OCI-LY7 (cell line): ENCODE measurements at regions of chr17 and their contacts with region 1.

Region 1: DNA sequence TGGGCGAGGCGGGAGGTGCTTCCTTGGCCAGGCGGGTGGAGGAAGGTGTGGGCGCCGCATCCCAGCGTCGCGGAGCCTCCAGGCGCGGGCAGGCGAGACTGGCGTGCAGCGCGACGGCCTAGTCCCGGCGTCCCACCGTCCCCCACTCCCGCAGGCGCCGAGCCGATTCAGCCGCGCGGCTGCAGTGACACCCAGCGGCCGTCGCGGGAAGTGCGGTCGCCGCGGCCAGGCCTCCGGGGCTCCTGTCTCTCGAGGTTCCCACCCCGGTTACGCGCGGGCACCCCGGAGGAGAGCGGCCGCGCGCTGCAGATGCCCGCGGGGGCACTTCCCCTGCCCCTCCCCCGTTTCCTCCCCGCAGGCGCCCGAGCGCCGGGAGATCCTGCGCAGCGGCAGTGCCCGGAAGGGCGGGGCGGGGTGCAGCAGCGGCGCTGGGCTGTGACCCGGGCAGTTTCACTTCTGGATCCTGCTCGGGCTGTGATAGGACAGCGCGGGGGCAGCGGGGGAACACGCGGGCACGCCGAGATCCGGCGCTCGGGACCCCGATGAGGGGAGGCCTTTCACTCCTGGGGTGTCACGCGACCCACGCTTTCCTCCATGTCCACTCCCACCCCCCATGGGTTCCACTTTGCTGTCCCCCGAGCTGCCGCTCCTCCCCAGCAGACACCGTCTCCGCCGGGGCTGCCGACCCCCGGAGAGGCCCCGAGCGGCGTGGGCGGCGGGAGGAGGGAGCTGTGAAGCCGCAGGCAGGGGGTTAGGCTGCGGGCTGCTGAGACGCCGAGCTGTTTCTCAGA is 16.6 kb downstream of the GRB7 start:
- DNase-seq: peak; percentile 99
- H3K4me3 ChIP-seq: peak overlapping the region; percentile 67
- H3K27ac ChIP-seq: peak overlapping the region; percentile 99
- H3K4me1 ChIP-seq: peaks cover 73% of the 10 kb centered on the region
- CTCF ChIP-seq: peak; percentile 76

Region 2: DNA sequence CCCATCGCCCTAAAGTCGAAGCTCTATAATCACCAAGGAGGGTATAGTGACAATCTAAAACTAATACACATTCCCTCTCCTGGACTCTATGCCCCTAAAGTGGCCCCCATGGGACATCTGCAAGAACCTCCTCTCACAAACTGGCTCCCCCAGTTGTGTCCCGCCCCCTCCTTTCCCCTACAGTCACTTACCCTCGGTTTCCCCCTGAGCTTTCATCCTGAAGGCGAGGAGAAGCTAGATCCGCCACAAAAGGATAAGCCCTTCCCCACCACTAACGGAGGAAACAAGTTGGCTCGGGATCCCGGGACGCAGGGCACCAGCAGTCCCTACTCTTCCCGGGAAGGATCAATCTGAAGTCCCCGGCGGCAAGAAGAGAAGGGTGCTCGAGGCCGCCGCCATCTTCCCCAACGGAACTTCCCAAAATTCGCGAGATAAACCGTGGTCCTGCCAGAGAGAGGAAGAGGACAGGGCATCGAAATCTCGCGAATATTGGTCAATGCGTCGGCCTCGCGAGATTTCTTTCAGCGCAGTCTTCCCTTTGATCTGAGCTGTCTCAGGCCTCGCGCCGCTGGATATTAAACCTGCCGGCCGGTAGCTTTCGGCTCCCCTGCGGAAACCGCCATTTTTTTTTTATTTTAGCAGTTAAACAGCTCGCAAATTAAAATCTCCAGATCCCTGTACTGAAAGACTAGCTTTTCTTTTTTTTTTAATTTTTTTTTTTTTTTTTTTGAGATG is 303.3 kb before region 1 on chr17 and contains the start of gene MED1:
- CTCF ChIA-PET with region 1: no interaction called
- POLR2A ChIA-PET with region 1: no interaction called
- intact Hi-C with region 1: loop called (anchors 10 kb)
- DNase-seq: peak; percentile 100
- H3K4me3 ChIP-seq: peak within 1 kb of the TSS; percentile 95
- H3K27ac ChIP-seq: peak within 1 kb of the TSS; percentile 60
- H3K4me1 ChIP-seq: peaks cover 26% of the 10 kb centered on the region
- CTCF ChIP-seq: no peak
- total RNA-seq, gene MED1: 32.2 and 33.9 TPM in 2 replicates

Region 3: DNA sequence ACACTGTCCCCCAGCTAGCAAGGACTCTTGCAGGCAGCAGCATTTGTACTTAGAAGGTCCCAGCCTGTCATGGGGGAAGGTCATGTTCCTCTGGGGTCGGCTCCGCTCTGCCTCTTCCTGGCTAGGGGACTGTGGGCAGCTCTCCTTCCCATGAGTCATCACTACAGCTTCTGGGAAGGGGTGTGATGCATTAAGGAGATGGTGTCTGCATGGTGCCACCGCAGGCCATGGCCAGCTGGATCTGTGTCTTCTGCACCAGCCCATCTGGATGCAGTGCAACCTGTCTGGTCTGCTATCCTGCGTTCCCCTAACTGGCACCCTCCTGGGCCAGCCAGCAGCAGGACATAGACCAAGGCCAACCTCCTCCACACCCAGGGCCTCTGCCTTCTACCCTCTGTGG is 111.1 kb before region 1 on chr17:
- CTCF ChIA-PET with region 1: no interaction called
- POLR2A ChIA-PET with region 1: no interaction called
- intact Hi-C with region 1: no loop called
- DNase-seq: no peak
- H3K4me3 ChIP-seq: no peak overlapping the region
- H3K27ac ChIP-seq: no peak overlapping the region
- H3K4me1 ChIP-seq: peaks cover 10% of the 10 kb centered on the region
- CTCF ChIP-seq: no peak

Region 4: DNA sequence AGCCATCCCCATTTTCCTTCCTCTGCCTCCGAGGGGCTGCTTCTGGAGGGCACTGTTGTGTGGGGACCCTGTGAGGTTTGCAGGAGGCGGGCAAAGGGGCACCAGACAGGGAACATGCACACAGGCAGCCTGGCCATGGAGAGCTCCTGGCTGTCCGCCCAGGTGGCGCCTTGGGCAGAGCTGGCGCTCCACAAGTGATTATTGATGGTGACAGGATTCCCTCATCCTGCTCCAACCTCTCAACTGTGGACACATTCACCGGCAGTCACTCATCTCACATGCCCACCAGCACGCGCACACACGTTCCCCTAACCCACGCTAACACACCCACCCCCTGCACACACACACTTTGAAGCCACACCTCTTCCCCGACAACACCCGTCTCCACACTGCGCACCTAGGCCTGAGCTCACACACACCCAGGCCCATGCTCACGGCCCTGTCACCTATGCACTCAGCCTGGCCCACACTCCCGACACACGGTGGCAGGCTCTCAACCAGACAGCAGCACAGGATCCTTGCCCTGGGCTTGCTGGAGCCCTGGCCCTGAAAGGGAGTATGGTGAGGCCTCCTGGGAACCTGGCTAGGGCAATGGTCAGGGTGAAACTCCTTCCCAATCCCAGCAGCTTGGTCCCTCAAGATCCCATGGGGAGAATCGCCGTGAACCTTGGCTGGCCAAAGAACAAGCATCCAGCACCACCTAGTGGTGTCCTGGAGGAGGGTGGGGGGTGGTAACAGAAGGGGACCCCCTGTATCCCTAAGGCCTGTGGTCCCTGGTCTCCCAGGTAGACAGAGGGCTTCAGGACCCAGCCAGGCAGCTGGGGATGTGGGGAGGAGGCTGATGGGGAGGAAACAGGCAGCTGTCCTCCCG is 82.5 kb before region 1 on chr17:
- CTCF ChIA-PET with region 1: no interaction called
- POLR2A ChIA-PET with region 1: no interaction called
- intact Hi-C with region 1: loop called (anchors 1 kb)
- DNase-seq: peak; percentile 52
- H3K4me3 ChIP-seq: no peak overlapping the region
- H3K27ac ChIP-seq: no peak overlapping the region
- H3K4me1 ChIP-seq: peaks cover 26% of the 10 kb centered on the region
- CTCF ChIP-seq: peak; percentile 88

Region 5: DNA sequence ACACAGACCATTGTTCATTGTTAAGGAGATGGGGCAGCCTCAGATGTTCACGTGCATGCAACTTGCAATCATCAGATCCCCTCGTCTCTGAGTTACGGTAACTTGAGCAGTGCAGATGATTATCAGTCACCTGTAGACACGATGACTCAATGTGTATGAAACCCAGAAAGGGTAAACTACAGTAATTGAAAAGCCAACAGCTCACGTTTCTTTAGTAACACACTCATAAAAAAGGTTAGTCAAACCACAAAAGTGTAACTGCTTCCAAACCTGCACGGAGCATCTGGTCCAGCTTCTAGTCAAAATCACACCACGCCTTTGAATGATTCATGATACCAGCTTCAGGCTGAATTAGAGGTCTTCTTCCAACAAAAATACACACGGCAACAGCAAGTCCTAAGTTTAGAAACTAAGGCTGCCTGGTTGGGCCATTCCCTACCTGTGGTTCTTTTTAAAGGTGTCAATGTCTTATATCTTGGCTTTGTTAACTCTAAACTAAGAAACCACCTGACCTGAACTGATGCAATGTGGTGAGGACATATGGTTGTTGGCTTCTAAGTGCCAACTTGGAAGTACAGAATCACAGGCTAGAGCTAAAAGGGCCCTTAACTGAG is 15.7 kb after region 1 on chr17:
- CTCF ChIA-PET with region 1: no interaction called
- POLR2A ChIA-PET with region 1: interaction called, 24 read pairs
- intact Hi-C with region 1: no loop called
- DNase-seq: peak; percentile 67
- H3K4me3 ChIP-seq: peak overlapping the region; percentile 41
- H3K27ac ChIP-seq: peak overlapping the region; percentile 94
- H3K4me1 ChIP-seq: peaks cover 85% of the 10 kb centered on the region
- CTCF ChIP-seq: no peak

Region 6: DNA sequence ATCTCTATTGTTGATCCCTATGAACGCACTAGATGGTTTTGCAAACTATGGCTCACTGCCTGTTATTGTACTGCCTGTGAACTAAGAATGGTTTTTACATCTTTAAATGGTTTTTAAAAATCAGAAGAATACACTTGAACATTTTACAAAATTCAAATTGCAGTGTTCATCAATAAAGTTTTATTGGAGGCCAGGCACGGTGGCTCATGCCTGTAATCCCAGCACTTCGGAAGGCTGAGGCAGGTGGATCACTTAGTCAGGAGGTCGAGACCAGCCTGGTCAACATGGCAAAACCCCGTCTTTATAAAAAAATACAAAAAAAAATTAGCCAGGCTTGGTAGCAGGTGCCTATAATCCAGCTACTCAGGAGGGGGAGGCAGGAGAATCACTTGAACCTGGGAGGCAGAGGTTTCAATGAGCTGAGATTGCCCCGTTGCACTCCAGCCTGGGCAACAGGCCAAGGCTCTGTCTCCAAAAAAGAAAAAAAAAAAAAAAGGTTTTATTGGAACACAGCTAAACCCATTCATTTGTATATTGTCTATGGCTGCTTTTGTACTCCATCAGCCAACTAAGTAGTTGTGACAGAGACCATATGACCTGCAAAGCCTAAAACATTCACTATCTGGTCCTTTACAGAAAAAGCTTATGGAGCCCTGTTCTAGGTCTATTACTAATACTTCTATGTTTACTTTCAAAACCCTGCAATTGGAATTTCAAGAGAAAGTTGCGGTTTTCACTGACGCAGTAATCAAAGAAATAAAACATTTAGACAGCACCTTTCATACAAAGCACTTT is 90.9 kb after region 1 on chr17:
- CTCF ChIA-PET with region 1: interaction called, 3 read pairs
- POLR2A ChIA-PET with region 1: interaction called, 3 read pairs
- intact Hi-C with region 1: loop called (anchors 5 kb)
- DNase-seq: no peak
- H3K4me3 ChIP-seq: no peak overlapping the region
- H3K27ac ChIP-seq: no peak overlapping the region
- H3K4me1 ChIP-seq: peaks cover 76% of the 10 kb centered on the region
- CTCF ChIP-seq: no peak

Region 7: DNA sequence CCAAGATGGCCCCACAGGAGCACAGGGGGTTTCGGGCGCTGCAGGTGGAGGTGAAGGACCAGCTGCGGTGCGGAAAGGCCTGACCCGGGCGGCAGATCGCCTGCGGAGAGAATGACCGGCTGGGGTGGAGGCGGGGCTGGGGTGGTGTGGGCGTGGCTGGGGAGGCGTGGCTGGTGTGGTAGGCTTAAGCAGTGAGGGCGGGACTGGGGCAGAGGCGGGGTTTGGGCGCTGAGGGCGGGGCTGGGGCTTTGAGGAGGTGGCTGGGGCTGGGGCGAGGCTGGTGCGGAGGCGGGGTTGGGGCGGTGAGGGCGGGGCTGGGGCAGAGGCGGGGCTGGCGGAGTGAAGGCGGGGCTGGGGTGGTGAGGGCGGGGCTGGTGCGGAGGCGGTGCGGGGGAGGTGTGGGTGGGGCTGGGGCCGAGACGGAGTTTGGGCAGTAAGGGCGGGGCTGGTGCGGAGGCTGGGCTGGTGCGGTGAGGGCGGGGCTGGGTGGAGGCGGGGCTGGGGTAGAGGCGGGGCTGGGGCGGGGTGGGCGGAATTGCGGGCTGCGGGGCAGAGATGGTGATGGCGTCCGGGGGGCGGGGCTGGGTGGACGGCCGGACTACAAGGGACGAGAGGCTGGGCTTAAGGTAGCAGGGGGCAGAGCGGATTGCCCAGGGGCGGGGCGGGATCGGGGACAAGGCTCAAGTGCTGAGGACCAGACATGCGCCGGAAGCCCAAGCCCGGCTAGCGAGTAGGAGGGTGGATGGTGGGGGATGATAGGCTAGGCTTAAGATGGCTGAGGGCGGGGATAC is 198.5 kb after region 1 on chr17:
- CTCF ChIA-PET with region 1: no interaction called
- POLR2A ChIA-PET with region 1: no interaction called
- intact Hi-C with region 1: loop called (anchors 10 kb)
- DNase-seq: peak; percentile 92
- H3K4me3 ChIP-seq: peak overlapping the region; percentile 66
- H3K27ac ChIP-seq: peak overlapping the region; percentile 9
- H3K4me1 ChIP-seq: peaks cover 25% of the 10 kb centered on the region
- CTCF ChIP-seq: no peak